ENCODE measurements at regions of chr10 and their contacts with region 1.

Region 1: DNA sequence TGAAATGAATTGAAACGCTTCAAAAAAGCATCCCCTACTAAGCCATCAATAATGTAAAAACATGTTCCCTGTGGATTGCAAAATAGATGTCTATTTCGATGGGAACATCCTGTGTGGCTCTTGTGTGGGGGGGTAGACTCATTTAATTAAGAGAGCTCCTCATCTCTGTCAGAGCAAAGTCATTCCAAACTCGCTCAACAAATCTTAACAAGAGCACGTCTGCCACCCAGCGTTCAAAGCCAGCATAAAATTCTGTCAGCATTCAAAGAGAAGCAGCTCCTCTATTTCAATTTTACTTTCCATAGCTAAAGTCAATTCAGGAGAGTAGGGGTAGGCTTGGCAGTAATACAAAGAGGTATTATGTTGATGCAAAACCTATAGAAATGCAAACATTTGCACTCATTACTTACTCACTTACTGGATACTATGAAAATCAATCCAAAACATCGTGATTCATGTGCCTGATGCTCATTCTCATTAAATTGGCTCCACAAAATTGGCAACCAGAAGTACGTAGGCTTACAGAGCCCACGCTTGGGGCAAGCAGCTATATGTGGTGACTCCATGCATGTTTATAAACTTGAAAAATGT is 114.9 kb downstream of the IPMK start:
- DNase-seq: peak; percentile 72
- ATAC-seq: peak; percentile 74
- H3K4me3 Mint-ChIP-seq: no peak overlapping the region
- H3K27ac Mint-ChIP-seq: no peak overlapping the region
- H3K4me1 Mint-ChIP-seq: peaks cover 29% of the 10 kb centered on the region
- H3K27me3 Mint-ChIP-seq: no peaks in the 10 kb centered on the region
- CTCF ChIP-seq: peak; percentile 55

Region 2: DNA sequence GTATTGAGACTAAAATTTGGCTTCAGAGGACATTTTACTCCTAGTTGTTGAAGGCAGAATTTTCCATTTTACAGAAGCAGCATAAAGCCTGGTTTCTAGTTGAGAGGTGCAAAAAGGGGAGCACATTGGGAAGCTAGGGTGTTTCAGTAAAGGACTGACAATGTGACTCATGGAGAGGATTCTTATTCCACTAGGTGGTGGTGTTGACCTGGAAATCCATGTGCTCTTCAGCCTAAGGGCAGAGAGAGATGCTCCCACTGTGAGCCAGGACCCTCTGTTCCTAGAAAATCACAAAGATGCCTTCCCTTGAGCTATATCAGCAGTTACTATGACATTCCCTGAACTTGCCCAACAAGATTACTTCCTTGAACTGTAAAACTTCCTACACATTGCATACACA is 572.8 kb before region 1 on chr10:
- CTCF ChIA-PET with region 1: interaction called, 23 read pairs
- POLR2A ChIA-PET with region 1: no interaction called
- DNase-seq: peak; percentile 36
- ATAC-seq: peak; percentile 99
- H3K4me3 Mint-ChIP-seq: no peak overlapping the region
- H3K27ac Mint-ChIP-seq: no peak overlapping the region
- H3K4me1 Mint-ChIP-seq: peaks cover 3% of the 10 kb centered on the region; the same call in 1 of the 2 replicates
- H3K27me3 Mint-ChIP-seq: no peaks in the 10 kb centered on the region; the same call in 1 of the 2 replicates
- CTCF ChIP-seq: peak; percentile 54

Region 3: GRCh38 chr10:57657164-57657765 is 495.5 kb before region 1 on chr10:
- CTCF ChIA-PET with region 1: interaction called, 39 read pairs
- POLR2A ChIA-PET with region 1: no interaction called
- DNase-seq: peak; percentile 68
- ATAC-seq: peak; percentile 98
- H3K4me3 Mint-ChIP-seq: no peak overlapping the region
- H3K27ac Mint-ChIP-seq: no peak overlapping the region
- H3K4me1 Mint-ChIP-seq: peaks cover 15% of the 10 kb centered on the region
- H3K27me3 Mint-ChIP-seq: no peaks in the 10 kb centered on the region
- CTCF ChIP-seq: peak; percentile 78; the same call in 1 of the 2 replicates

Region 4: GRCh38 chr10:58064714-58065528 is 87.8 kb before region 1 on chr10:
- CTCF ChIA-PET with region 1: interaction called, 24 read pairs
- POLR2A ChIA-PET with region 1: no interaction called
- DNase-seq: peak; percentile 25
- ATAC-seq: peak; percentile 64
- H3K4me3 Mint-ChIP-seq: no peak overlapping the region
- H3K27ac Mint-ChIP-seq: 0 out of 2 replicates have a peak overlapping the region, but pooled peaks have one; percentile 17
- H3K4me1 Mint-ChIP-seq: peaks cover 39% of the 10 kb centered on the region
- H3K27me3 Mint-ChIP-seq: no peaks in the 10 kb centered on the region
- CTCF ChIP-seq: peak; percentile 74

Measured in WTC11 (cell line).